Activated CD8-positive, alpha-beta memory T cell treated with anti-CD3 and anti-CD28 coated beads, Interleukin-2, amount 10 ng/mL, durations not matched to agents 7 days and 5 days (primary cell): ENCODE measurements at regions of chr3 and their contacts with region 1.

Region 1: DNA sequence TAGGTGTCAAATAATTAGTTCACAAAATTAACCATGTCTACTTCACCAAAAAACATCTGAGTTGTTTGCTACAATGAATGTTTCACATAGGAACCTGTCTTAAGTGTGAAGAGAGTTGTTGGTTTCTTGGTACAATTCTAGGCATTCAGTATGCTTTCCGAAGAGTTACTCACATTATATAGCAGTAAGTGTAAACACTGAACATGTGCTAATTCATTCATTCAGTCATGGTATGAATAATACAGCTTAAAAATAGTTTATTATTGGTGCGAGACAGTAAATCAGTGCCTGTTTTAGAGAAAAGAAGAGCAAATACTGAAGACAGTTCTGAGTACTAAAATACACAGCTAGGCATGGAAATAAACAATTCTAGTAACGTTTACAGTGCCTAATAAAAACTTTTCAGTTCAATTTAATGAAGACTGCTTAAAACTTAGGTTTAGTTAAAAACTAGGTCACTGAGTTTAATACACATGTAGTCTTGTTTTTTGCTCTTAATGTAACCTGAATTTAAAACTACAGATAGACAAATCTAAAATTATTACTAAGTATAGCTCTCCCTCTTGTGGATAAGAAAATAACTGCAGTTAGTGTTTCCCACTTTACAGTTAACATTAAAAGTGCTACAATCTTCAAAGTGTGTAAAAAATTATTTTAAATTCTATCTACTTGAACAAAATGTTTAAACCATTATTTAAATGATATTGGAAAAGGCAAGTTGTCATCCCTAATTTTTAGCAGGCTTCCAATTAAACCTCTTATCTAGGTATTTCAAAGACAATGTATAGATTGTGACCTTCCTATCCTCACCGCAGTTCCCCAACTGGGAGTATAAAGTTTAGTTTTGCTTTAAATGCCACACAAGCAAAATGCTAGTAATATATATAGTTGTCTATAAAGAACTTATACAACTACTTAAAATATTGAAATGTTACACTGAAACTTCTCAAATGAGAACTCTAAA is 20.1 kb upstream of the ZCWPW2 start:
- DNase-seq: no peak
- ATAC-seq: no peak
- H3K4me3 Mint-ChIP-seq: no peak overlapping the region
- H3K27ac Mint-ChIP-seq: peak overlapping the region; percentile 68
- H3K4me1 Mint-ChIP-seq: peaks cover 48% of the 10 kb centered on the region
- H3K27me3 Mint-ChIP-seq: no peaks in the 10 kb centered on the region

Region 2: DNA sequence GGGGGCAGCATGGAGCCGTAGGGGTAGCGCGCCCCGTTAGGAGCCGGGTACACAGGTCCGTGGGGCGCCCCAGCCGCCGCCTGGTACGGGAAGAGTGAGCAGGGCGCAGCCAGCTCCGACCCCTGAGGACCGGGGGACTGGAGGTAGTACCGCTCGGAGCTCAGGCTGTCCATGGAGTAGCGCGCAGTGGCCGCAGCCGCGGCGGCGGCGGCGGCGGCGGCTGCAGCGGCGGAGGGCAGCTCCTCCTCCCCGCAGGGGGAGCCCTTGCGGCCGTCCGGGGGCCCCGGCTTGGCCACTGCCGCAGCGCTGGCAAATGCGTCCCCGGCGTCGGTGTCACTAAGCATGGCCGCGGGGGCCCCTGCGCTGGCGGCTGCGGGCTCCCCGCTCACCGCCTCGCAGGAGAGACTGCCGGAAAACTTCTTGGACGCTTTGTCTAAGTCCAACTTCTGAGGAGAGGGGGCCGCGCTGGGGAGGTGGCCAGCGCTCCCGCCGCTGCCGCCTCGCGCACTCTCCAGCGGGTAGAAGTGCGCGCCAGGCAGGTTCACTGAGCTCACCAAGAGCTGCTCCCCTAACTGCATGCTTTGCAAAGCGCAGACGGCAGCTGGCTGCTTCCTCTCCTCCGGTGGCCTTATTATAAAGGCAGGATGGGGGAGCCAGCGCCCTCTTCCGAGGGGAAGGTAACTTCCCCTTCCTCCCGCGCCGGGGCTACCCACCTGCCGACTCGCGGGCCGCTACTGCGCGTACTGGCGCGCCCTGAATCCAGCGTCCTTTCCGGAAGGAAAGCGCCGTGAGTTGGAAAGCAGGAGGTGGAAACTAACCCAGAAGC is 606.5 kb before region 1 on chr3 and contains the start of gene EOMES:
- CTCF ChIA-PET with region 1: interaction called, 82 read pairs
- DNase-seq: peak; percentile 86
- ATAC-seq: peak; percentile 74
- H3K4me3 Mint-ChIP-seq: peak within 1 kb of the TSS; percentile 81
- H3K27ac Mint-ChIP-seq: peak within 1 kb of the TSS; percentile 84
- H3K4me1 Mint-ChIP-seq: peaks cover 42% of the 10 kb centered on the region
- H3K27me3 Mint-ChIP-seq: peaks cover 48% of the 10 kb centered on the region
- total RNA-seq, gene EOMES: 7.3 to 12.5 TPM

Region 3: GRCh38 chr3:28317438-28318022 is 10.9 kb before region 1 on chr3:
- CTCF ChIA-PET with region 1: interaction called, 14 read pairs
- DNase-seq: peak; percentile 50
- ATAC-seq: peak; percentile 98
- H3K4me3 Mint-ChIP-seq: no peak overlapping the region
- H3K27ac Mint-ChIP-seq: no peak overlapping the region
- H3K4me1 Mint-ChIP-seq: peaks cover 27% of the 10 kb centered on the region
- H3K27me3 Mint-ChIP-seq: no peaks in the 10 kb centered on the region

Region 4: GRCh38 chr3:28348629-28349483 is 20.4 kb after region 1 on chr3 and contains the starts of genes AZI2 and ZCWPW2:
- CTCF ChIA-PET with region 1: interaction called, 15 read pairs
- DNase-seq: peak; percentile 96
- ATAC-seq: peak; percentile 85
- H3K4me3 Mint-ChIP-seq: peak within 1 kb of the TSS; percentile 86
- H3K27ac Mint-ChIP-seq: peak within 1 kb of the TSS; percentile 99
- H3K4me1 Mint-ChIP-seq: peaks cover 43% of the 10 kb centered on the region
- H3K27me3 Mint-ChIP-seq: no peaks in the 10 kb centered on the region
- total RNA-seq, gene AZI2: 63.3 to 68.1 TPM
- total RNA-seq, gene ZCWPW2: 0.35 TPM in 1 of 2 experiments, not detected in the other